ENCODE measurements at regions of chr13 and their contacts with region 1.

Region 1: DNA sequence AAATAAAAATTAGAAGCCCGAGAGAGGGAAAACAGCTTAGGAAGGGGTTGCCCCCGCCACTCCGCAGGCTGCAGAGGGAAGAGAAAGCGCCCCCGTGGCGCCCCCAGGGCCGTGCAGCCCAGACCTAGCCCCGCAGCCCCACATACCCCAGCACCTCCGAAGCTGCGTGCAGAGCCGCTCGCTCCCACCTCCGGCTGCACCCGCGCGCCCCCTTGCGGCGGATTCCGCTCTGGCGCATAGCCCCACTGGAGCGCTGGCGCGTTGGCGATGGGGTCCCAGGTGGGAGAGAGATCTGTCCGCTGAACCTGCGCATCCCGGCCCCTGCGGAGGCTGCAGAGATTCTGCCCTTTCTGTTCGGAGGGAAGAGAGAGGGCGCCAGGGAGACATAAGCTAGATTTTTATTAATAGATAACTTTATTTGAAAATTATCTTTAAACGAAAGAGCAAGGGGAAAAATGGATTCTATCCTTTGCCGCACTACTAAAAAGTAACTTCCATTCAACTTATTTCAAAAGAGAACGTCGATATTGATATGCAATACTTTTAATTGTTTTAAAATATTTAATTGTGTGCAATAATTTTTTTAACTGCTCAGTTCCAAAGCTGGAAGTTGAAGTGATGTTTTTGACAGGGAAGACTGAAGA is 11.7 kb upstream of the CLN5 start:
- DNase-seq: peak; percentile 85
- H3K4me3 Mint-ChIP-seq: no peak overlapping the region
- H3K27ac Mint-ChIP-seq: no peak overlapping the region
- H3K4me1 Mint-ChIP-seq: peaks cover 8% of the 10 kb centered on the region
- H3K27me3 Mint-ChIP-seq: peaks cover 13% of the 10 kb centered on the region

Region 2: DNA sequence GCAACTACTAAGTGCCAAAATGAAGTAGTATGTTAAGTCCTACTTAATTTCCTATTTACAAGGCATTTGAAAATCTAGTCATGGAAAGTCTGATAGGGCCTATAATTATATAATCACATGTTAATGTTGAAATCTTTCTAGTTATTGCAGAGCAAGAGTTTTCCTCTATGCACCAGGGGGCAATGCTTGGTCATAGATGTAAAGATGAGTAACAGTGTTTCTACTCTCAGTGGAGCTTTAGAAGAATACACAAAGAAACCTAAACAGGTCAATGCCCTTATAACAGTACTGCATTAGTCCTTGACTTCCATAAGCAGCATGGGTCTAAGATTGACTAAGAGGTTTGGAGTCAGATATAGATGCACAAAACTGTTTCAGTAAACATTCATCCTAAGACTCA is 312.6 kb before region 1 on chr13:
- CTCF ChIA-PET with region 1: interaction called, 7 read pairs
- intact Hi-C with region 1: loop called (anchors 1 kb)
- DNase-seq: peak; percentile 40
- H3K4me3 Mint-ChIP-seq: no peak overlapping the region
- H3K27ac Mint-ChIP-seq: no peak overlapping the region
- H3K4me1 Mint-ChIP-seq: peaks cover 7% of the 10 kb centered on the region
- H3K27me3 Mint-ChIP-seq: no peaks in the 10 kb centered on the region

Region 3: GRCh38 chr13:76822698-76823267 is 157.4 kb before region 1 on chr13:
- CTCF ChIA-PET with region 1: interaction called, 9 read pairs
- intact Hi-C with region 1: loop called (anchors 1 kb)
- DNase-seq: peak; percentile 19
- H3K4me3 Mint-ChIP-seq: no peak overlapping the region
- H3K27ac Mint-ChIP-seq: no peak overlapping the region
- H3K4me1 Mint-ChIP-seq: peaks cover 2% of the 10 kb centered on the region
- H3K27me3 Mint-ChIP-seq: no peaks in the 10 kb centered on the region

Region 4: GRCh38 chr13:76903544-76904162 is 76.5 kb before region 1 on chr13:
- CTCF ChIA-PET with region 1: interaction called, 3 read pairs
- intact Hi-C with region 1: loop called (anchors 5 kb)
- DNase-seq: peak; percentile 81
- H3K4me3 Mint-ChIP-seq: no peak overlapping the region
- H3K27ac Mint-ChIP-seq: no peak overlapping the region
- H3K4me1 Mint-ChIP-seq: no peaks in the 10 kb centered on the region
- H3K27me3 Mint-ChIP-seq: peaks cover 10% of the 10 kb centered on the region

Region 5: DNA sequence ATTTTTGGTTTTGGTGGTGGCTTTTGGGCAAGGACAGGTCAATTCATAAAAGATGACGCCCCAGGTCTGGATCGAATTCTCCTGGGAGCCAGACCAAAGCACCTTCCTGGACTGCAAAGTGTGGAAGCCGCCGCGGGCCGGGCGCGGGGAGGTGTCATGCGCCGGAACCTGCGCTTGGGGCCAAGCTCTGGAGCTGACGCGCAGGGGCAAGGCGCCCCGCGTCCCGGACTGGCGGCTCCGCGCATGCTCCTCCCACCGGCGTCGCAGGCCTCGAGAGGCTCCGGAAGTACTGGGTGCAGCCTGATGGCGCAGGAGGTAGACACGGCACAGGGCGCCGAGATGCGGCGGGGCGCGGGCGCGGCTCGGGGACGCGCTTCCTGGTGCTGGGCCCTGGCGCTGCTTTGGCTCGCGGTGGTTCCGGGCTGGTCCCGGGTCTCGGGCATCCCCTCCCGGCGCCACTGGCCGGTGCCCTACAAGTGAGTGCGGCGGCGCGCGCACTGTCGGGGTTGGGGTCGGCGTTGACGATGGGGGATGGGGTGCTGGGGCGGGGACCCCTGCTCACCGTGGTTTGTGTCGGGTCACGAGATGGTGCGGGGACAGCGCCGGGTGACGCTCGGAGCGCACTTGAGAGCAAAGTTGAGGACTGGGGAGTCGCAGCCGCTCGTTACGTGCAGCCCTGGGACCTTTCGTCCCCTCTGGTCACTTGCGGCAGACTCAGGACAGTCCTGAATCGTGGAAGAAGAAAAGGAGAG is 11.8 kb after region 1 on chr13 and contains the start of gene CLN5:
- CTCF ChIA-PET with region 1: interaction called, 14 read pairs
- intact Hi-C with region 1: loop called (anchors 1 kb)
- DNase-seq: peak; percentile 95
- H3K4me3 Mint-ChIP-seq: peak within 1 kb of the TSS; percentile 95
- H3K27ac Mint-ChIP-seq: peak within 1 kb of the TSS; percentile 97
- H3K4me1 Mint-ChIP-seq: peaks cover 39% of the 10 kb centered on the region
- H3K27me3 Mint-ChIP-seq: no peaks in the 10 kb centered on the region
- total RNA-seq, gene CLN5: 13.6 to 14.6 TPM

Region 6: GRCh38 chr13:77002590-77003190 is 22.5 kb after region 1 on chr13:
- CTCF ChIA-PET with region 1: interaction called, 7 read pairs
- intact Hi-C with region 1: loop called (anchors 1 kb)
- DNase-seq: no peak
- H3K4me3 Mint-ChIP-seq: no peak overlapping the region
- H3K27ac Mint-ChIP-seq: peak overlapping the region; percentile 0
- H3K4me1 Mint-ChIP-seq: peaks cover 40% of the 10 kb centered on the region
- H3K27me3 Mint-ChIP-seq: no peaks in the 10 kb centered on the region

Measured in activated naive CD4-positive, alpha-beta T cell treated with anti-CD3 and anti-CD28 coated beads for 36 hours (primary cell).